A549 (cell line): ENCODE measurements at regions of chr5 and their contacts with region 1.

Region 1: DNA sequence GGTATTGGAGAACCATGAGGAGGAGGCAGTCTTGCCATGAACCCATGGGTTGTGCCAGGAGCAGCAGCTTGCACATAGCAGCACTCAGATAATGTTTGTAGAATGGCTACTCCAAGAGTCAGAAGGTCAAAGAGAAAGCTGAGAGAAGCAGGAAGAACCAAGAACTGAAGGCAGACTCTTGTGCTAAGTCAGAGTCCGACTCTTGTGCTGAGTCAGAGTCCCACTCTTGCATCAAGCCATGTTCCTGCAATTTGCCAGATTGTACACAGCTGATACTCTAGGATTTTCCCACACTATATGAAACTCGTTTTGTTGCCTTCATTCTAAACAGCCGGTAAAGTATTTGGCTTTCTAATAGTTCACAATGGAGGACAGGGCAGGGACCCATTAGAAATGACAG is 26.2 kb upstream of the HSPA9 start:
- DNase-seq: peak in 1 of 2 experiments; percentile 61
- ATAC-seq: peak; percentile 67 to 69; a peak in 5 of 6 replicates
- H3K4me3 ChIP-seq: no peak overlapping the region
- H3K27ac ChIP-seq: peak overlapping the region; percentile 29 to 59
- H3K4me1 ChIP-seq: peaks cover 9% of the 10 kb centered on the region; the same call in 2 of the 3 replicates
- CTCF ChIP-seq: no peak
- EP300 ChIP-seq: no peak
- POLR2A ChIP-seq: no peak
- RAD21 ChIP-seq: no peak

Region 2: GRCh38 chr5:138515556-138516245 is 85.7 kb before region 1 on chr5:
- CTCF ChIA-PET with region 1: no interaction called
- POLR2A ChIA-PET with region 1: no interaction called
- DNase-seq: no peak
- ATAC-seq: no peak
- H3K4me3 ChIP-seq: no peak overlapping the region
- H3K27ac ChIP-seq: no peak overlapping the region
- H3K4me1 ChIP-seq: peaks cover 4% of the 10 kb centered on the region; the same call in 2 of the 3 replicates
- CTCF ChIP-seq: no peak
- EP300 ChIP-seq: no peak
- POLR2A ChIP-seq: no peak
- RAD21 ChIP-seq: no peak

Region 3: GRCh38 chr5:138588013-138588788 is 13.2 kb before region 1 on chr5:
- CTCF ChIA-PET with region 1: interaction called, 14 read pairs
- POLR2A ChIA-PET with region 1: no interaction called
- DNase-seq: no peak
- ATAC-seq: no peak
- H3K4me3 ChIP-seq: no peak overlapping the region
- H3K27ac ChIP-seq: no peak overlapping the region
- H3K4me1 ChIP-seq: no peaks in the 10 kb centered on the region
- CTCF ChIP-seq: no peak
- EP300 ChIP-seq: no peak
- POLR2A ChIP-seq: no peak
- RAD21 ChIP-seq: no peak